Activated B cell treated with CpG ODN at 0.5 μM for 24 hours (primary cell): ENCODE measurements at regions of chr9 and their contacts with region 1.

Region 1: DNA sequence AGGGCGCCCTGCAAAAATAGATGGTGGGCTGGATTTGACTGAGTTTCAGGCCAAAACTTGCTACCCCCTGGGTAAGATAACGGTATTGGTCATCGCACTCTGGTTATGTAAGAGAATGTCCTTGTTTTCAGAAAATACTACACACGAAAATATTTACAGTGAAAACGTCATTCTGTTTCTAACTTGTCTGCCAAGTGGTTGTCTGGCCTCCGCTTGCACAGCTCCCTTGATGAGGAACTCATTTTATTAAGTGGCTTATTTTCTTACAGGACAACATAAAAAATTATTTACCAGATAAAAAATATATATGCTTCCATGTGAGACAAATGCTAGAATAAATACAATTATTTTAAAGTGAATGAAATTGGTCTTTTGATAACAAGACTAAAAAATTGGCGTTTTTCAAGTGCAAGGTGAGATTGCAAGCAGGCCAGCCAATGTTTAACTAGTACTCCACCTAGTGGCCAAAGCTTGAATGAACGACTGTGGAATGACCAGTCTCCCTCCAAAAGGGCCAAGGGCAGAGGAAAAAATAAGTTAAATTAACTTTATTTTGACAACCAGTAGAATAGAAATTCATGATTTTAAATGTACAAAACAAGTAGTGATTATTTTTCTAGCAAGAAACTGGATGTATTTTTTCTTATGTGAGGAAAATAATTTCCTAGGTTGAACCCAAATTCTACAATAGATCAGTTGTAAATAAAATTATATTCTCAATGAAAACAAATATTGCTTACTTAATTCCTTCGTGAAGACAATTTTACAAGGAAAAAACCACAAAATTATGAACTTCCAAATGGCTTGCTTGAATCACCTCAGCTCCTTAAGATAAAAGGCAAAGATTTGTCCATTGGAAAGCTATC is 93.2 kb downstream of the ZFAND5 start:
- DNase-seq: no peak
- ATAC-seq: peak; percentile 62
- H3K4me3 Mint-ChIP-seq: no peak overlapping the region
- H3K27ac Mint-ChIP-seq: no peak overlapping the region
- H3K4me1 Mint-ChIP-seq: no peaks in the 10 kb centered on the region
- H3K27me3 Mint-ChIP-seq: peaks cover 3% of the 10 kb centered on the region
- CTCF ChIP-seq: no peak

Region 2: GRCh38 chr9:70639853-70640814 is 1631.7 kb before region 1 on chr9:
- CTCF ChIA-PET with region 1: interaction called, 3 read pairs
- POLR2A ChIA-PET with region 1: no interaction called
- intact Hi-C with region 1: loop called (anchors 5 kb)
- DNase-seq: no peak
- ATAC-seq: no peak
- H3K4me3 Mint-ChIP-seq: no peak overlapping the region
- H3K27ac Mint-ChIP-seq: no peak overlapping the region
- H3K4me1 Mint-ChIP-seq: no peaks in the 10 kb centered on the region
- H3K27me3 Mint-ChIP-seq: peaks cover 18% of the 10 kb centered on the region
- CTCF ChIP-seq: no peak

Region 3: GRCh38 chr9:71285191-71285656 is 986.6 kb before region 1 on chr9:
- CTCF ChIA-PET with region 1: interaction called, 5 read pairs
- POLR2A ChIA-PET with region 1: no interaction called
- intact Hi-C with region 1: loop called (anchors 1 kb)
- DNase-seq: no peak
- ATAC-seq: peak; percentile 61
- H3K4me3 Mint-ChIP-seq: no peak overlapping the region
- H3K27ac Mint-ChIP-seq: no peak overlapping the region
- H3K4me1 Mint-ChIP-seq: no peaks in the 10 kb centered on the region
- H3K27me3 Mint-ChIP-seq: peaks cover 2% of the 10 kb centered on the region
- CTCF ChIP-seq: no peak

Region 4: DNA sequence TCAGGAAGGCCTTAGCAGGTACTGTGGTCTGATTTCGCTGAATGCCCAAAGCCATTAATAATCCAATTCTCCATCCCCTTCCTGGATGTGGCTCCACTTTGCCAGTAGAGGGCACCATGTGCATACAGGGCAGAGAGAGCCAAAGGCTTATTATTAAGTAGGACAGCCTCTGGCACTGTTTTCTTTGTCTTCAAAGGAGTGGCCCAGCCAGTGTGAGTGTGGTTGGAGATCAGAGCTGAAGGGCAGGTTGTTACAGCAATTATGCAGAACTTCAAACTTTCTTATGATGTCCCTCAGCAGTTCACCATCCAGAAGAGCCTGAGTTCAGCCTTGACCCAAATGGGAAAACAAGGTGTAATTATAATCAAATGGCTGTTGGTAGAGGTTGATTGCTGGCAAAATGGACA is 464.9 kb before region 1 on chr9:
- CTCF ChIA-PET with region 1: interaction called, 4 read pairs
- POLR2A ChIA-PET with region 1: no interaction called
- intact Hi-C with region 1: loop called (anchors 1 kb)
- DNase-seq: no peak
- ATAC-seq: peak; percentile 96
- H3K4me3 Mint-ChIP-seq: no peak overlapping the region
- H3K27ac Mint-ChIP-seq: peak overlapping the region; percentile 57
- H3K4me1 Mint-ChIP-seq: peaks cover 16% of the 10 kb centered on the region
- H3K27me3 Mint-ChIP-seq: no peaks in the 10 kb centered on the region
- CTCF ChIP-seq: peak; percentile 21

Region 5: DNA sequence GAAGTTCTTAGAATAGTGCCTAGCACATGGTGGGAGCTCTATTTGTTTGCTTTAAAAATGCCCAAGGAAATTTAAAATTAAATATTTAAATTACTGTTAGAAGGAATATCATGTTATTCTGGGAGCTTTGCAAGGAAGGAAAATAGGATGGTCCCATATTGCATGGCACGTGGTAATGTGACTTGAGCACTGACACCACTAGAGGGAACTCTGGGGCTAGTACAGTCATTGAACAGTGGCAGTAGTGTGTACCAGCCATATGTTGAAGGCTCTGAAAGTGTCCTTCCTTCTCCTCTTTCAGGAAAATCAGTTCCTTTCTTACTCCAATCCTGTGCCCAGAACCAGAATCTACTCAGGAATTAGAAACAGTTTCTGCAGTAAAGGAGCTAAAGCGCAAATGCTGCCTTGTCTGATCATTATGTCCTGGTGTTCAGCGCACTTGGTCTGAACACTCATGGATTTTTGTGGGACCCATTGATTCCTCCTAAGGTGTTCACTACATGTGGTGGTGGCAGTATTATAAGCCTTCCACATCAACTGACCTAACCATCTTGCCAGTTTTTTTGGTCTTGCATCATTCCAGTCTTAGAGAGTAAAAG is 68.5 kb before region 1 on chr9:
- CTCF ChIA-PET with region 1: interaction called, 5 read pairs
- POLR2A ChIA-PET with region 1: no interaction called
- intact Hi-C with region 1: loop called (anchors 1 kb)
- DNase-seq: no peak
- ATAC-seq: no peak
- H3K4me3 Mint-ChIP-seq: no peak overlapping the region
- H3K27ac Mint-ChIP-seq: no peak overlapping the region
- H3K4me1 Mint-ChIP-seq: peaks cover 2% of the 10 kb centered on the region
- H3K27me3 Mint-ChIP-seq: no peaks in the 10 kb centered on the region
- CTCF ChIP-seq: no peak